Activated CD4-positive, alpha-beta T cell treated with anti-CD3 and anti-CD28 coated beads for 36 hours (primary cell): ENCODE measurements at regions of chr3 and their contacts with region 1.

Region 1: GRCh38 chr3:155805802-155806618 is at the start of gene C3orf33:
- DNase-seq: peak; percentile 87
- ATAC-seq: peak; percentile 98
- H3K4me3 Mint-ChIP-seq: peak within 1 kb of the TSS; percentile 81
- H3K27ac Mint-ChIP-seq: peak within 1 kb of the TSS; percentile 84
- H3K4me1 Mint-ChIP-seq: peaks cover 10% of the 10 kb centered on the region
- H3K27me3 Mint-ChIP-seq: peaks cover 9% of the 10 kb centered on the region
- total RNA-seq, gene C3orf33: 1.5 to 1.6 TPM

Region 2: GRCh38 chr3:155646128-155646527 is 159.9 kb before region 1 on chr3:
- CTCF ChIA-PET with region 1: no interaction called
- POLR2A ChIA-PET with region 1: no interaction called
- intact Hi-C with region 1: no loop called
- DNase-seq: no peak
- ATAC-seq: no peak
- H3K4me3 Mint-ChIP-seq: no peak overlapping the region
- H3K27ac Mint-ChIP-seq: no peak overlapping the region
- H3K4me1 Mint-ChIP-seq: no peaks in the 10 kb centered on the region
- H3K27me3 Mint-ChIP-seq: no peaks in the 10 kb centered on the region

Region 3: DNA sequence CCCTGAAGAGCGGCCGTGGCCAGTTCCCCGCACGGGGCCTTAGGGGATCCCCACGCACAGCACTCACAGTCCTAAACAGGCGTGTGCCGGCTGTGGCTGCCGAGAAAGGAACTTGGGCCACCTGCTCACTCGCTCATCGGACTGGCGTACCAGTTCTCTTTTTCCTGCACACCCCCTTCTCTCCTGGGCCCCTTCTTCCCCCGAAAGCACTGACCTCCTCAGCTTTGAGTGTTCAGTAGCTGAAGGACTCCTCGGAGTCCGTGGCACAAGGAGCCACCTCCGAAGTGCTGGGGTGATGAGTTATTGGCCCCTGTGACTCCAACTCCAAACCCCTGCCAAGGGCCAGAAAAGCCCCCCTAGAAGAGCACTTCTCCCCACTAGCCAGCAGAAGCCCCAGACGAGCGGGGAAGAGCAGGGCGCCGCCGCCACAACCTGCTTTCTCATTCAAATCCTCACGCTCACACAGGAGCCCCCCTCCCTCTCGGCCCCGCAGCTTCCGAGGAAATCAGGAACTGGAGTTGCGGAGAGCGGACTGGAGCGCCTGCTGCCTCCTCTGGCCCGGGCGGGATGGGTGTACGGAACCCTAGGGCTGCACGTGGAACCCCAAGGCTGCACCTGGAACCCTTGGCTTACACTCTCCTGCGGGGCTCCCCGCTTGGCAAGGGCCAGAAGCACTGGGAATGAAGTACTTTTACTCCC is 61.2 kb before region 1 on chr3 and contains the start of gene PLCH1:
- CTCF ChIA-PET with region 1: interaction called, 19 read pairs
- POLR2A ChIA-PET with region 1: interaction called, 3 read pairs
- intact Hi-C with region 1: loop called in 1 of 2 experiments (anchors 2 kb)
- DNase-seq: peak; percentile 68
- ATAC-seq: peak; percentile 73
- H3K4me3 Mint-ChIP-seq: peak within 1 kb of the TSS; percentile 78
- H3K27ac Mint-ChIP-seq: peak within 1 kb of the TSS; percentile 39
- H3K4me1 Mint-ChIP-seq: peaks cover 13% of the 10 kb centered on the region
- H3K27me3 Mint-ChIP-seq: peaks cover 40% of the 10 kb centered on the region
- total RNA-seq, gene PLCH1: 0.16 to 0.26 TPM

Region 4: DNA sequence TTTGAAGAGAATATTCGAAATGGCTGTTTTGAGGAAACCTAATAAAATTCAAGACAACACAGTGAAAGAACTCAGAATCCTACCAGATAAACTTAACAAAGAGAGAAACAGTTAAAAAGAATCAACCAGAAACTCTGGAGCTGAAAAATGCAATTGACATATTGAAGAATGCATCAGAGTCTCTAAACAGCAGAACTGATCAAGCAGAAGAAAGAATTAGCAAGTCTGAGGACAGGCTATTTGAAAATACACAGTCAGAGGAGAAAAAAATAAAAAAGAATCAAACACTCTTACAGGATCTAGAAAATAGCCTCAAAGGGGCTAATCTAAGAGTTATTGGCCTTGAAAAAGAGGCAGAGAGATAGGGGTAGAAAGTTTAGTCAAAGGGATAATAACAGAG is 13.5 kb before region 1 on chr3:
- CTCF ChIA-PET with region 1: interaction called, 10 read pairs
- POLR2A ChIA-PET with region 1: no interaction called
- intact Hi-C with region 1: no loop called
- DNase-seq: no peak
- ATAC-seq: no peak
- H3K4me3 Mint-ChIP-seq: no peak overlapping the region
- H3K27ac Mint-ChIP-seq: no peak overlapping the region
- H3K4me1 Mint-ChIP-seq: no peaks in the 10 kb centered on the region
- H3K27me3 Mint-ChIP-seq: no peaks in the 10 kb centered on the region